Activated CD4-positive, alpha-beta T cell treated with anti-CD3 and anti-CD28 coated beads for 36 hours (primary cell): ENCODE measurements at regions of chr6 and their contacts with region 1.

Region 1: DNA sequence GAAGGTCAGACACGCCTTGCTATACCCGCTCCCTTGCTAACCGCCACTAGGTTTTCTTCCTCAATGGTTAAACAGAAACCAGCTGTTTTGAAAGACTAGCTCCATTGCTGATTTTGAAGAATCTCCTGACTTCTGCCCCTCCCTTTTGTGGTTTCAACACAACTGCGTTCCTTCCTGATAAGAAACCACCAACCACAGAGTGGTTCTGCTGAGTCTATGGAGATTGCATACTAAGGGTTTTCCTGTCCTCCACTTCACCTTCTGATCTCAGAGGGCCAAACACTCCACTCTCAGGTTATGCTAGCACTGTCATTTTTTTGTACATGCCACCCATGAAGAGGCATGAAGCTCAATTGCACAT is 207.9 kb downstream of the MYLK4 start:
- DNase-seq: peak; percentile 58
- ATAC-seq: peak; percentile 93
- H3K4me3 Mint-ChIP-seq: no peak overlapping the region
- H3K27ac Mint-ChIP-seq: no peak overlapping the region
- H3K4me1 Mint-ChIP-seq: peaks cover 17% of the 10 kb centered on the region
- H3K27me3 Mint-ChIP-seq: peaks cover 67% of the 10 kb centered on the region

Region 2: GRCh38 chr6:2563635-2564034 is 20.8 kb after region 1 on chr6:
- CTCF ChIA-PET with region 1: interaction called, 5 read pairs
- POLR2A ChIA-PET with region 1: interaction called, 3 read pairs
- intact Hi-C with region 1: loop called (anchors 1 kb)
- DNase-seq: peak; percentile 44
- ATAC-seq: peak; percentile 98
- H3K4me3 Mint-ChIP-seq: no peak overlapping the region
- H3K27ac Mint-ChIP-seq: no peak overlapping the region
- H3K4me1 Mint-ChIP-seq: peaks cover 10% of the 10 kb centered on the region
- H3K27me3 Mint-ChIP-seq: peaks cover 47% of the 10 kb centered on the region

Region 3: DNA sequence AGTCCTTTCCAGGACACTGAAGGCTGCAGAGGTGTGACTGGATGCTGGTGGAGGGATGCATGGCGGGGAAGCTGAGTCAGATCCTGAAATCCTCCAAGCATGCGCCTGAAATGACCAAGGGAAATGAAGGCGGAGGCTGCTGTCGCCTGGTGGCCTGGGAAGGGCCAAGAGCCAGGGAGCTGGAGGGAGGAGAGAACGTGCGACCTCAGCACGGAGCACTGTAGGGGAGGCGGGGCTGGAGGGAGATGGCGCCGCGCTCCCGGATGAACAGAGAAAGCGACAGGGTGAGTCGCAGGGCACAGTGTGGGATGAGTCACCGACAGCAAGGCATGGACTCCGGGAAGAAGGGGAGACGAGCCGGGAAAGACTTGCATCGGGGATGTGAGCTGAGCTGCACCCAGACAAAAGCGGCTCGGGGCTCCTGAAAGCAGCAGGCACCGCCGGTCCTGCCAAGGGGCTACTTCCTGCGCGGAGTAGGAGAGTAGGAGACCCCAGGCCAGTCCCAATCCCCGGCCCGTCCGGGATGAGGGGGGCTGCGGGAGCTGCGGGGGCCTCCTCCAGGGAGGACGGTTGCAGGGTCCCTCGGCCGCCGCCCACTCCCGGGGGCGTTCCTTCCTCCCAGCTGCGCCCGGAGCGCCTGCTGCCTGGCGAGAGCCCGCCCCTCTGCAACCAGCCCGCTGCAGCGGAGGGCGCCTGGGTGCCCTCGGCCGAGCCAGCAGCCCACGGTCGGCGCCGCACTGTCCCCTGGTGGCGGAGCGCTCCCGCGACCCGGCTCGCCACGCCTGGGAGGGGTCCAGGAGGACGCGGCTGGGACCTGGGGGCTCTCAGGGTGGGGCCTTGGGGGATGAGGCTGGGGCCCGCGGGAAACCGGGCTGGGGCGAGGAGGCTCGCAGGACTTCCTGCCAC is 445.8 kb after region 1 on chr6:
- CTCF ChIA-PET with region 1: no interaction called
- POLR2A ChIA-PET with region 1: no interaction called
- intact Hi-C with region 1: no loop called
- DNase-seq: peak; percentile 89
- ATAC-seq: peak; percentile 81
- H3K4me3 Mint-ChIP-seq: peak overlapping the region; percentile 87
- H3K27ac Mint-ChIP-seq: peak overlapping the region; percentile 99
- H3K4me1 Mint-ChIP-seq: peaks cover 20% of the 10 kb centered on the region
- H3K27me3 Mint-ChIP-seq: no peaks in the 10 kb centered on the region